Breast epithelium (tissue), 4 donors: ENCODE measurements at regions of chr12 and their contacts with region 1.

Region 1: DNA sequence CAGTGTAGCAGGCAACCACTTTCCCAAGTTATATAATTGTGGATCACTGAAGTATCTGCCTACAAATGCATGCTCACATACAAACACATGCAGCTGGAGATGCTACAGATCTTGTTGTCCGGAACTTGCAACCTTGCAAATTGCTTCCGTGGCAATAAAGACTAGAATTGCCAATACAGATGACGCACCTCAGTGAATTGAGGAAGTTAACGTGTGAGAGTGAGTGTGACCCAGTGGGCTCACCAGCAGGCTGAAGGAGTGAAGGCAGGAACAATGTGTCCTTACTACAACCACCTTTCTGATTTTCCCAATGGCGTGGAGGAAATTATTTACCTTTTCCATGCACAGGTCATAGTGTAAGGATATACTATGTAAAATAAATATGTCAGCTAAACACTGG is 89.4 kb upstream of the GRIP1 start:
- DNase-seq: no peak
- H3K4me3 ChIP-seq: no peak overlapping the region
- H3K27ac ChIP-seq: no peak overlapping the region
- H3K4me1 ChIP-seq: no peaks in the 10 kb centered on the region
- H3K27me3 ChIP-seq: no peaks in the 10 kb centered on the region
- CTCF ChIP-seq: no peak
- POLR2A ChIP-seq: no peak

Region 2: GRCh38 chr12:66725031-66725430 is 43.3 kb before region 1 on chr12:
- intact Hi-C with region 1: loop called (anchors 5 kb)
- DNase-seq: no peak
- H3K4me3 ChIP-seq: no peak overlapping the region
- H3K27ac ChIP-seq: no peak overlapping the region
- H3K4me1 ChIP-seq: no peaks in the 10 kb centered on the region
- H3K27me3 ChIP-seq: no peaks in the 10 kb centered on the region
- CTCF ChIP-seq: no peak
- POLR2A ChIP-seq: no peak

Region 3: GRCh38 chr12:66799551-66799950 is 31.3 kb after region 1 on chr12:
- intact Hi-C with region 1: loop called (anchors 2 kb)
- DNase-seq: no peak
- H3K4me3 ChIP-seq: no peak overlapping the region
- H3K27ac ChIP-seq: no peak overlapping the region
- H3K4me1 ChIP-seq: no peaks in the 10 kb centered on the region
- H3K27me3 ChIP-seq: no peaks in the 10 kb centered on the region
- CTCF ChIP-seq: no peak
- POLR2A ChIP-seq: no peak

Region 4: DNA sequence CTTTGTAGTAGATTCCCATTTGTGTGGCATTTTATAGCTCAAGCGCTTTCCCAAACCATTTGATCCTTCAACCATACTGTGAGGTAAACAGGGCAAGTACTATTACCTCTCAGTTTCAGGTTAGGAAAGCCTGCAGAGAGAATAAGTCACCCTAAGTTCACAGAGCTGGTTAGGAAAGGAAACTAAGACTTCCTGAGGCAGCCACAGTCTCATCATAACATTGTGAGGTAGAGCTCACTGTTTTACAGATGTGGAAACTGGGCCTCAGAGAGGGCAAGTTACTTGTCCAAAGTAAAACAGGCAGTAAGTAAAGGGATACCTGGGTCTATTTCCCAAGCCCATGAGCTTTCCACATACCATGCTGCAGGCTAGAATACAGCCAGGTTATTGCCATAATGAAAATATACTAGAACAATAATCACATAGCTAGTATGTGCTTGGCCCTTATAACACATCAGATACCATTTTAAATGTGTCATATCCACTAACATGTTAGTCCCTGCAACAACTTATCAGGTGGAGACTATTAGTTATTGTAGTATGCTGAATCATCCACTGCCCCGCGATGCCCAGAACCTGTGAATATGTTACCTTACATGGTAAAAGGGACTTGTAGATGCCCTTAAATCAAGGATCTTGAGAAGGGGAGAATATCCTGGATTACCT is 61.5 kb after region 1 on chr12:
- intact Hi-C with region 1: no loop called
- DNase-seq: no peak
- H3K4me3 ChIP-seq: no peak overlapping the region
- H3K27ac ChIP-seq: no peak overlapping the region
- H3K4me1 ChIP-seq: no peaks in the 10 kb centered on the region
- H3K27me3 ChIP-seq: no peaks in the 10 kb centered on the region
- CTCF ChIP-seq: no peak
- POLR2A ChIP-seq: no peak

Region 5: GRCh38 chr12:67025543-67026114 is 257.3 kb after region 1 on chr12:
- intact Hi-C with region 1: no loop called
- DNase-seq: no peak
- H3K4me3 ChIP-seq: no peak overlapping the region
- H3K27ac ChIP-seq: no peak overlapping the region
- H3K4me1 ChIP-seq: no peaks in the 10 kb centered on the region
- H3K27me3 ChIP-seq: no peaks in the 10 kb centered on the region
- CTCF ChIP-seq: peak in 1 of 3 donors; percentile 19
- POLR2A ChIP-seq: no peak